Astrocyte of the cerebellum (primary cell): ENCODE measurements at regions of chr12 and their contacts with region 1.

Region 1: GRCh38 chr12:53561590-53561953 is 54.3 kb upstream of the NPFF start:
- DNase-seq: peak; percentile 76
- H3K4me3 ChIP-seq: no peak overlapping the region
- CTCF ChIP-seq: no peak

Region 2: DNA sequence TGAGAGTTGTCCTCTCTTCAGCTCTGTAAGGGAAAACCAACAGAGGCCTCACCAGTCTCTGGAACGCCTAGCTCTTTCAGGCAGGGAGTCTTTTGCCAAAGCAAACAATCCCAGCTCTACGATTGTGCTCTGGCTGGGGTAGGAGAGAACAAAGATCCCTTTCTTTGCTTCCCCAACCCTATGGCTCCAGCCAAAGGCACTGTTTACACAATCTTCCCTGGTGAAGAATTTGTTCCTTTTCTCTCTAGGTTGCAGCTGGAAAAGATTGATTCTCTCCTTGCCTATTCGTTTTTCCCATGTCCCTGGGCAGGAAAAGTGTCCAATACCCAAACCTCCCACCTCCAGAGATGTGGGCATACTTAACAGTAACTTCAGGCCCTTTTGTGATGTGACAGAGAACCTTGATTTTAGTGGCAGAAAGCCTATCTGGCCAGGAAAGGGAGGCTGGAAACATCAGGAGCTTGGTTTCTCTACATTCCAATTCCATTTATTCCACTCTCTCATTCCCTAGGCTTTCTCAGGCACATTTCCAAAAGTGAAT is 97.5 kb after region 1 on chr12:
- in situ Hi-C with region 1: loop called (anchors 25 kb)
- DNase-seq: peak; percentile 88
- H3K4me3 ChIP-seq: no peak overlapping the region
- CTCF ChIP-seq: no peak